GM12878 (cell line): ENCODE measurements at regions of chr17 and their contacts with region 1.

Region 1: GRCh38 chr17:28112220-28113005 is 69.9 kb downstream of the NLK start:
- DNase-seq: no peak
- ATAC-seq: no peak
- H3K4me3 ChIP-seq: no peak overlapping the region
- H3K27ac ChIP-seq: no peak overlapping the region
- H3K4me1 ChIP-seq: peaks cover 6% of the 10 kb centered on the region
- H3K27me3 ChIP-seq: no peaks in the 10 kb centered on the region
- CTCF ChIP-seq: no peak
- EP300 ChIP-seq: no peak
- POLR2A ChIP-seq: no peak
- RAD21 ChIP-seq: no peak

Region 2: GRCh38 chr17:27692766-27693165 is 419.6 kb before region 1 on chr17:
- CTCF ChIA-PET with region 1: no interaction called
- POLR2A ChIA-PET with region 1: no interaction called
- RAD21 ChIA-PET with region 1: no interaction called
- SMC1A ChIA-PET with region 1: no interaction called
- in situ Hi-C with region 1: no loop called
- intact Hi-C with region 1: no loop called
- DNase-seq: no peak
- ATAC-seq: no peak
- H3K4me3 ChIP-seq: no peak overlapping the region
- H3K27ac ChIP-seq: no peak overlapping the region
- H3K4me1 ChIP-seq: no peaks in the 10 kb centered on the region
- H3K27me3 ChIP-seq: no peaks in the 10 kb centered on the region
- CTCF ChIP-seq: no peak
- EP300 ChIP-seq: no peak
- POLR2A ChIP-seq: no peak
- RAD21 ChIP-seq: no peak

Region 3: DNA sequence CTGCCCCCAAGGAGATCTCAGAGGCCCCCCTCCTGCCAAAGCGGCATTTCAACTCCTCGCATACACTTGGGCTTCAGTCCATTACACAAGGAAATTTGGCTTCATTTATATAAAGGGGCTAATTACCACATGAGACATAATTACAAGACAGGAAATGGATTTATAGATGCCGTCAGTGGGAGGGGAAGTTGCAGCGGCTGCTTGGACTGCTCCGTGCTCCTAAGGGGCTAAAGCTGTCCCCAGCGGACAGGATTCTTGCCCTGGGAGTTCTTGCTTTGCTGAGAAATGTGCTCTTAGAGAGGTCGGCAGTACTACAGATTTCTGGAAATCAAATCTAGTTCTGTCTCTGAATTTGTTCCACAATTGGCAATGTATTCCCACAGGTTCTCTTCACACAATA is 127.1 kb before region 1 on chr17:
- CTCF ChIA-PET with region 1: no interaction called
- POLR2A ChIA-PET with region 1: no interaction called
- RAD21 ChIA-PET with region 1: no interaction called
- SMC1A ChIA-PET with region 1: no interaction called
- in situ Hi-C with region 1: no loop called
- intact Hi-C with region 1: no loop called
- DNase-seq: no peak
- ATAC-seq: peak; percentile 67
- H3K4me3 ChIP-seq: no peak overlapping the region
- H3K27ac ChIP-seq: no peak overlapping the region; the same call in 1 of the 2 replicates
- H3K4me1 ChIP-seq: peaks cover 14% of the 10 kb centered on the region
- H3K27me3 ChIP-seq: no peaks in the 10 kb centered on the region; a peak in 1 of 4 replicates
- CTCF ChIP-seq: no peak
- EP300 ChIP-seq: no peak
- POLR2A ChIP-seq: no peak
- RAD21 ChIP-seq: no peak

Region 4: DNA sequence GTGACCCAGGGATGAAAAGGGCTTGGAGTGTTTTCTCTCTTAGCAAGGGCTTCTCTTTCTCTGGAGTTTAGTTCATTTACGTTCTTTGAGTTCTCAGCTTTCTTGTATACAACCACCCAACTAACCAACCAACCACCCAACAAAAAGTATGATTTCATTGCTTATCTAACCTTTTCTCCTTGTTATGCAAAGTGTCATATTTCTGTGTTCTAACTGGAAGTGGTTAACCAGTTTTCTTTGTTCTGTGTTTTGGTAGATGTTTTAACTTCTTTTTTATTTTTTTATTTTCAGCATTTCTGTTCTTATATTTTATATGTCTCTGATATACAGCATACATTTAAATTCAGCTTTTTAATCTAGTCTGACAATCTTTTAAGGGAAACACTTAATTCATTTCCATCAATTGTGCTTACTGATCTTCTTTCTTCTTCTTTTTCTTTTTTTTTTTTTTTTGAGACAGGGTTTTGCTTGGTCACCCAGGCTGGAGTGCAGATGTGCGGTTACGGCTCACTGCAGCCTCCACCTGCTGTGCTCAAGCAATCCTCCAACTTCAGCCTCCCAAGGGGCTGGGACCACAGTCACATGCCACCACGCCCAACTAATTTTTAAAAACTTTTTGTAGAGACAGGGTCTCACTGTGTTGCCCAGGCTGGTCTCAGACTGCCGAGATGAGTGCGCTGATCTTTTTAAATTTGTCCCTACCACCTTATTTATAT is 40.4 kb before region 1 on chr17:
- CTCF ChIA-PET with region 1: no interaction called
- POLR2A ChIA-PET with region 1: no interaction called
- RAD21 ChIA-PET with region 1: no interaction called
- SMC1A ChIA-PET with region 1: no interaction called
- in situ Hi-C with region 1: no loop called
- intact Hi-C with region 1: no loop called
- DNase-seq: no peak
- ATAC-seq: peak; percentile 71
- H3K4me3 ChIP-seq: no peak overlapping the region
- H3K27ac ChIP-seq: 0 out of 2 replicates have a peak overlapping the region, but pooled peaks have one; percentile 25
- H3K4me1 ChIP-seq: peaks cover 3% of the 10 kb centered on the region; the same call in 1 of the 2 replicates
- H3K27me3 ChIP-seq: no peaks in the 10 kb centered on the region
- CTCF ChIP-seq: no peak
- EP300 ChIP-seq: no peak; a peak in 1 of 4 replicates
- POLR2A ChIP-seq: no peak
- RAD21 ChIP-seq: no peak

Region 5: DNA sequence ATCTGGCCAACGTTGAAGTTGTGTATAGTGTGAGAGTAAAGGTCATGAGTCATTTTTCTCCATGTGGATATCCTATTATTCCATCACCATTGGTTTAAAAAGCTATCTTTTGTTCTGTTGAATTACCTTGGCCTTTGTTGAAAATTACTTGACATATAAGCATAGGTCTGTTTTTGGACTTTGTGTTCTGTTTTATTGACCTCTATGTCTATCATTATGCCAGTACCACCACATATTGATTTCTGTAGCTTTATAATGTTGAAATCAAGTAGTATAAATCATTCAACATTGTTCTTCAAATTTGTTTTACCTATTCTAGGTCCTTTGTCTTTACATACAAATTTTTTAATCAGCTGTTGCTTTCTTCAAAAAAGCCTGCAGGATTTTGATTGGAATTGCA is 11.5 kb before region 1 on chr17:
- CTCF ChIA-PET with region 1: no interaction called
- POLR2A ChIA-PET with region 1: no interaction called
- RAD21 ChIA-PET with region 1: no interaction called
- SMC1A ChIA-PET with region 1: interaction called, 12 read pairs
- in situ Hi-C with region 1: no loop called
- intact Hi-C with region 1: no loop called
- DNase-seq: no peak
- ATAC-seq: no peak
- H3K4me3 ChIP-seq: no peak overlapping the region
- H3K27ac ChIP-seq: no peak overlapping the region
- H3K4me1 ChIP-seq: peaks cover 10% of the 10 kb centered on the region; the same call in 1 of the 2 replicates
- H3K27me3 ChIP-seq: no peaks in the 10 kb centered on the region
- CTCF ChIP-seq: no peak
- EP300 ChIP-seq: no peak
- POLR2A ChIP-seq: no peak
- RAD21 ChIP-seq: no peak